Heart left ventricle (tissue), 16 donors: ENCODE measurements at regions of chr4 and their contacts with region 1.

Region 1: GRCh38 chr4:158821228-158821971 is 52.6 kb downstream of the FNIP2 start:
- DNase-seq: no peak
- ATAC-seq: peak in 1 of 4 donors; percentile 25
- H3K4me3 ChIP-seq: no peak overlapping the region
- H3K27ac ChIP-seq: peak overlapping the region in 9 of 12 donors; percentile 10 to 77 (median 48)
- H3K4me1 ChIP-seq: peaks cover 13 to 96% (median 74%) of the 10 kb centered on the region in 12 donors
- H3K27me3 ChIP-seq: no peaks in the 10 kb centered on the region
- CTCF ChIP-seq: no peak
- POLR2A ChIP-seq: no peak

Region 2: DNA sequence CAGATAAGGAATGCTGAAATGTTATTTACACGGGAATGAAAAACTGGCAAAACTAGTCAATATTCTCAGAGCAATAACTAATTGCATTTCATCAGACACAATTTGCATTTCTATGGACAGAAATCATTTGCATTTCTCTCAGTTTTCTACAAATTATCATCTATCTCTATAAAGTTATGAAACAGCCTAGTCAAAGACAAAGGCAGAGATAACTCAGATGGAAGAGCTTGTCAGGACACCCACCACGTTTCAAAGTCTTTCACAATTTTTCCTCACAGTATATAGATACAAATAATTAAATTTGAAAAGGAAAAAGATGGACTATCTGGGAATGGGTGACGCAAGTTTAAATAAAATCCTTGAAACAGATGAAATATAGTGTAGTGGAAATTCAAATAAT is 879.4 kb before region 1 on chr4:
- intact Hi-C with region 1: no loop called
- DNase-seq: no peak
- ATAC-seq: no peak
- H3K4me3 ChIP-seq: no peak overlapping the region
- H3K27ac ChIP-seq: no peak overlapping the region
- H3K4me1 ChIP-seq: no peaks in the 10 kb centered on the region
- H3K27me3 ChIP-seq: no peaks in the 10 kb centered on the region
- CTCF ChIP-seq: no peak
- POLR2A ChIP-seq: no peak

Region 3: DNA sequence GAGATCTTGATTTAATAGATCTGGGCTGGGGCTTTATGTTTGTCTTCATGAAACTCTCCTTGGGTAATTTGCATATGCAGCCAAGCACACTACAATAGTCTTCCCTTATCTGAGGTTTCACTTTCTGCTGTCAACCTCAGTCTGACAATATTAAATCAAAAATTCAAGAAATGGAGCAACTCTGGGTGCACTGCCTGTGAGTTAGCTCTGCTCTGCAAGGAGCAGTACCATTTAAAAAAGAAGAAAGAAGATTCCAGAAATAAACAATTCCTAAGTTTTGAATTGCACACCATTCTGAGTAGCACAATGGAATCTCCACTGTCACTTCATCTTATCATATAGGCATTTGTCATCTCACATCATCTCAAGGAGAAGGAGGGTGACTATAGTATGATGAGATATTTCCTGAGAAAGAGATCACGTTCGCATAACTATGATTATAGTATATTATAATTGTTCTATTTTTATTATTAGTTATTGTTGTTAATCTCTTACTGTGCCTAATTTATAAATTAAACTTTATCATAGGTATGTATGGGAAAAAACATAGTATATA is 43.2 kb before region 1 on chr4:
- intact Hi-C with region 1: loop called in 4 of 10 experiments (anchors 5 to 10 kb)
- DNase-seq: no peak
- ATAC-seq: no peak
- H3K4me3 ChIP-seq: no peak overlapping the region
- H3K27ac ChIP-seq: peak overlapping the region in 2 of 12 donors; percentile 13 to 29
- H3K4me1 ChIP-seq: peaks cover 6 to 83% (median 69%) of the 10 kb centered on the region in 12 donors
- H3K27me3 ChIP-seq: no peaks in the 10 kb centered on the region
- CTCF ChIP-seq: no peak
- POLR2A ChIP-seq: no peak

Region 4: DNA sequence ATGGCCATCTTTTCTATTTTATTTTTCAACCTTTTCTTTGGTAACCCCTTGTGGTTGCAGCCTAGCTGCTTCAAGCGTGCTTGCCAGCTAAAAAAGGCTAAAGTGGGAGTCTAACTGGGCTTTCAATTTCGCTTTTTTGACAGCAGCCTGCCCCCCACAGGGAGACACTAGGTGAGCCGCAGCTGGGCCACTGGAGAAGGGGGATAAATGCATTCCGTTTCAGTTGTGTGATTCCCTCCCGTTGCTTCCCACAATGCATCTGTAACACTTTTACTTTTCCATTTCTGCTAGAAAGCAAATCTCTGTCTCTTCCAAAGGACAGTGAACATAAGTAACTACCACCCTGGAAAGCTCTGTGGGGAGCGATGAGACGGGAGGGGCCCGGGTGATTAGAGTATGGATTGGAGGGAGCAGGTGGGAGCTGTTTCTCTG is 195.2 kb after region 1 on chr4:
- intact Hi-C with region 1: no loop called
- DNase-seq: no peak
- ATAC-seq: no peak
- H3K4me3 ChIP-seq: peak overlapping the region in 1 of 12 donors; percentile 4
- H3K27ac ChIP-seq: no peak overlapping the region
- H3K4me1 ChIP-seq: peaks cover 0 to 11% (median 0%) of the 10 kb centered on the region in 12 donors
- H3K27me3 ChIP-seq: no peaks in the 10 kb centered on the region
- CTCF ChIP-seq: peak in 1 of 12 donors; percentile 9
- POLR2A ChIP-seq: no peak